Esophagus squamous epithelium (tissue), 5 donors: ENCODE measurements at regions of chr17 and their contacts with region 1.

Region 1: GRCh38 chr17:57009737-57010445 is 32.0 kb downstream of the SCPEP1 start:
- DNase-seq: no peak
- H3K4me3 ChIP-seq: no peak overlapping the region
- H3K27ac ChIP-seq: no peak overlapping the region
- H3K4me1 ChIP-seq: peaks cover 0 to 22% (median 0%) of the 10 kb centered on the region in 3 donors
- H3K27me3 ChIP-seq: no peaks in the 10 kb centered on the region
- CTCF ChIP-seq: peak; percentile 34 to 76 (median 67)
- POLR2A ChIP-seq: no peak

Region 2: DNA sequence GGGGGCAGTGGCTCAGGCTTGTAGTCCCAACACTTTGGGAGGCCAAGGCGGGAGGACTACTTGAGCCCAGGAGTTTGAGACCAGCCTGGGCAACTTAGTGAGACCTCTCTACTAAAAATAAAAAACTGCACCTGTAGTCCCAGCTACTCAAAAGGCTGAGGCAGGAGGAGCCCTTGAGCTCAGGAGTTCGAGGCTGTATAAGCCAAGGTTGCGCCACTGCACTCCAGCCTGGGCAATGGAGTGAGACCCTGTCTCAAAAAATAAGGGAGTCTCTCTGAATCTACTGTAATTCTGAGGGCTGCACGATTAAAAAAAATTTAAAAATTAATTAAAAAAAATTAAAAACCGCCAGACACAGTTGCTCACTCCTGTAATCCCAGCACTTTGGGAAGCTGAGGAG is 52.9 kb before region 1 on chr17:
- intact Hi-C with region 1: no loop called
- DNase-seq: no peak
- H3K4me3 ChIP-seq: no peak overlapping the region
- H3K27ac ChIP-seq: no peak overlapping the region
- H3K4me1 ChIP-seq: peaks cover 9 to 19% (median 11%) of the 10 kb centered on the region in 3 donors
- H3K27me3 ChIP-seq: no peaks in the 10 kb centered on the region
- CTCF ChIP-seq: no peak
- POLR2A ChIP-seq: no peak

Region 3: DNA sequence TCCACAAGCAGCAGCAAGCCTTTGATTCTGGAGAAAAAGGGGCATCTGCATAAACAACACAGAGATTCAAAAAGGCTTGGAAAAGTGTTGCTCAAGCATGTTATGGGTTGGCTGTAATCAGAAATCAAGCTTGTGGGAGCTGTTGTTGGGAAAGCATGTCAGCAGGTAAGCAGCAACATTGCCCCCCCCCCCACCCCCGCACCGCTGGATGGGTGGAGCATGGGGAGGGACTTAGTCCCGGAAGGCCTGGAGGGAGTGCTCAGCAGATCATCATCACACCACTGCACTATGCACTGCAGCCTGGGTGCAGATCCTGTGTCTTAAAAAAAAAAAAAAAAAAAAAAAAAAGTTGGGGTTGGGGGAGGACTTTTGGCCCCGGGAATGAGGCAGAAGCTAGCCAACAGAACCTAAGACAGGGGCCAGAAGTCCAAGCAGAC is 58.3 kb after region 1 on chr17:
- intact Hi-C with region 1: loop called (anchors 10 kb)
- DNase-seq: no peak
- H3K4me3 ChIP-seq: no peak overlapping the region
- H3K27ac ChIP-seq: peak overlapping the region in 2 of 4 donors; percentile 16 to 26
- H3K4me1 ChIP-seq: peaks cover 0 to 13% (median 0%) of the 10 kb centered on the region in 3 donors
- H3K27me3 ChIP-seq: no peaks in the 10 kb centered on the region
- CTCF ChIP-seq: no peak
- POLR2A ChIP-seq: no peak

Region 4: GRCh38 chr17:57097832-57098421 is 88.0 kb after region 1 on chr17:
- intact Hi-C with region 1: loop called (anchors 10 kb)
- DNase-seq: no peak
- H3K4me3 ChIP-seq: no peak overlapping the region
- H3K27ac ChIP-seq: peak overlapping the region in 3 of 4 donors; percentile 48 to 74 (median 64)
- H3K4me1 ChIP-seq: peaks cover 0 to 78% (median 18%) of the 10 kb centered on the region in 3 donors
- H3K27me3 ChIP-seq: no peaks in the 10 kb centered on the region
- CTCF ChIP-seq: no peak
- POLR2A ChIP-seq: no peak